ENCODE measurements at regions of chr9 and their contacts with region 1.

Region 1: GRCh38 chr9:97982683-97983588 is at the start of gene ANP32B:
- DNase-seq: peak; percentile 88 to 96 (median 93)
- H3K4me3 ChIP-seq: peak within 1 kb of the TSS; percentile 65
- H3K4me3 Mint-ChIP-seq: peak within 1 kb of the TSS; percentile 82 to 98 (median 90)
- H3K27ac ChIP-seq: peak within 1 kb of the TSS; percentile 83
- H3K27ac Mint-ChIP-seq: peak within 1 kb of the TSS; percentile 54 to 96 (median 84)
- H3K4me1 ChIP-seq: peaks cover 56% of the 10 kb centered on the region
- H3K4me1 Mint-ChIP-seq: peaks cover 29 to 39% (median 37%) of the 10 kb centered on the region in 3 donors
- H3K27me3 ChIP-seq: no peaks in the 10 kb centered on the region
- H3K27me3 Mint-ChIP-seq: no peaks in the 10 kb centered on the region
- total RNA-seq, gene ANP32B: 331 to 341 TPM

Region 2: GRCh38 chr9:97632985-97633858 is 349.7 kb before region 1 on chr9 and contains the starts of genes NCBP1 and TSTD2:
- CTCF ChIA-PET with region 1: no interaction called
- POLR2A ChIA-PET with region 1: interaction called, 10 read pairs
- DNase-seq: peak; percentile 90 to 98 (median 98)
- H3K4me3 ChIP-seq: peak within 1 kb of the TSS; percentile 75
- H3K4me3 Mint-ChIP-seq: peak within 1 kb of the TSS; percentile 95 to 99 (median 98)
- H3K27ac ChIP-seq: peak within 1 kb of the TSS; percentile 89
- H3K27ac Mint-ChIP-seq: peak within 1 kb of the TSS; percentile 99 to 100 (median 100)
- H3K4me1 ChIP-seq: peaks cover 46% of the 10 kb centered on the region
- H3K4me1 Mint-ChIP-seq: peaks cover 49 to 76% (median 69%) of the 10 kb centered on the region in 3 donors
- H3K27me3 ChIP-seq: no peaks in the 10 kb centered on the region
- H3K27me3 Mint-ChIP-seq: no peaks in the 10 kb centered on the region
- total RNA-seq, gene NCBP1: 47.7 to 49.6 TPM
- total RNA-seq, gene TSTD2: 13.8 to 14.7 TPM

Region 3: DNA sequence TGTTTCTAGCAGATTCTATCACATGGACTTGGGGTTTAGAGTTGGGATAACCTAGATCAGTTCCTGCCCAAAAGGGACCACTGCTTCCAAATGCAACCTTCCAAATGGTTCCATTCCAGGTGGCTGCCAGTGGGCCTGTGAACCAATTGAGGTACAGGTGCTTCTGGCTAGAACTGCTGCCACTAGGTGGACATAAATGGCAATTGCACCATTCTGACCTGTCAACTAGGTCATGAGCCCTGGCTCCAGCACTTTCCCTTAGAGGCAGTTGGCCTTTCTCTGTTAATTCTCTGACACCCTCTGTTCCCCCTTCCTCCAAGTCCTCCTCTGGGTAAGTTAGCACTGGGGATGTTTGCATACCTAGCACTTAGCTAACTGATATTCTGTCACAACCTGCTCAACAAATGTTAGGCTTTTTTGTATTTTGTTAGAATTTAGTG is 28.4 kb before region 1 on chr9:
- CTCF ChIA-PET with region 1: interaction called, 12 read pairs
- POLR2A ChIA-PET with region 1: no interaction called
- DNase-seq: peak; percentile 16 to 70 (median 53)
- H3K4me3 ChIP-seq: no peak overlapping the region
- H3K4me3 Mint-ChIP-seq: no peak overlapping the region
- H3K27ac ChIP-seq: no peak overlapping the region
- H3K27ac Mint-ChIP-seq: peak overlapping the region in 1 of 8 donors; percentile 11
- H3K4me1 ChIP-seq: no peaks in the 10 kb centered on the region
- H3K4me1 Mint-ChIP-seq: peaks cover 0 to 4% (median 0%) of the 10 kb centered on the region in 3 donors
- H3K27me3 ChIP-seq: no peaks in the 10 kb centered on the region
- H3K27me3 Mint-ChIP-seq: peaks cover 4% of the 10 kb centered on the region in 2 donors

Region 4: GRCh38 chr9:98002808-98003207 is 19.9 kb after region 1 on chr9:
- CTCF ChIA-PET with region 1: interaction called, 10 read pairs
- POLR2A ChIA-PET with region 1: no interaction called
- DNase-seq: no peak
- H3K4me3 ChIP-seq: no peak overlapping the region
- H3K4me3 Mint-ChIP-seq: no peak overlapping the region
- H3K27ac ChIP-seq: no peak overlapping the region
- H3K27ac Mint-ChIP-seq: peak overlapping the region in 4 of 8 donors; percentile 34 to 72 (median 49)
- H3K4me1 ChIP-seq: no peaks in the 10 kb centered on the region
- H3K4me1 Mint-ChIP-seq: peaks cover 22 to 56% (median 37%) of the 10 kb centered on the region in 3 donors
- H3K27me3 ChIP-seq: no peaks in the 10 kb centered on the region
- H3K27me3 Mint-ChIP-seq: no peaks in the 10 kb centered on the region

Region 5: DNA sequence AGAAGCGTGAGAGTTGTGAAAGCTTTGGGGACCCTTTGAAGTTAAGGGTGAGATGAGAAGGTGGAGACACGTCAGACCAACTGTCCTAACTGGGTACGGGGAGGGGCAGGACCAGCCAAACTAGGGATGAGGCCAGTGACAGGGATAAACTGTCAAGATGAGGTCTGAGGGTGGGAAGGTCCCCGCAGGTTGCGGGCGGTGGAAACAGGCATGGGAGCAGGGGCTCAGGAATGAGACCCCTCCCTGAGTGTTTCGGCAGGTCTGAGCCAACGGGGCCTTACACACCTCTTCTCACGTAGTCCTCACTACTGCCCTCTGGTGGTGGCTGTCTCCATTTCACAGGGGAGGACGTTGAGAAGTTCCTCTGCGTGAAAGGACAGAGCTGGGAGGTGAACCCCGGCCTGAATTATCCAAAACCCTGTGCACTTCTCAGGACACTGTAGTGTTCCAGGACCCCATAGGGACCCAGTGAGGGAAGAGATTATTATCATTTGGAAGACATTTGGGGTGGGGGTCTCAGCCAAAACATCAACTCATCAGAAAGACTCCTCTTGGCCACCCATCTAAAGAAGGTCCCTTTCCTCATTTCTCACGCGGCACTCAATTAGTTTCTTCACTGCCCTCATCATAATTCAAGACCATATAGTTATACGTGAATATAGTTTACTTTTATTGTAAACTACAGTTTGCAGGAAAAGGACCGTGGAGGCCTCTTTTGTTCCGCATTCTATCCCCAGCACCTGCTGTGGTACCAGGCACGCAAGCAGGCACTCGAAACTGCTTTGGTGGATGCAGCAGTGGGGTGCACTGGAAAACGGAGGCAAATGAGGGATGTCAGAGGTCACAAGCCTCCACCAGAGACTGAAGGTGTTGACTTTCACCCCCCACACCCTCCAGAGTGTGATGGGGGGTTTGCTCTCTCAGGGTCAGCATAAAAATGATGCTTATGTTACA is 51.9 kb after region 1 on chr9:
- CTCF ChIA-PET with region 1: interaction called, 11 read pairs
- POLR2A ChIA-PET with region 1: interaction called, 3 read pairs
- DNase-seq: peak; percentile 76 to 93 (median 88)
- H3K4me3 ChIP-seq: no peak overlapping the region
- H3K4me3 Mint-ChIP-seq: peak overlapping the region in 5 of 7 donors; percentile 6 to 56 (median 27)
- H3K27ac ChIP-seq: no peak overlapping the region
- H3K27ac Mint-ChIP-seq: peak overlapping the region in 6 of 8 donors; percentile 17 to 90 (median 30)
- H3K4me1 ChIP-seq: peaks cover 7% of the 10 kb centered on the region
- H3K4me1 Mint-ChIP-seq: peaks cover 6 to 8% (median 8%) of the 10 kb centered on the region in 3 donors
- H3K27me3 ChIP-seq: no peaks in the 10 kb centered on the region
- H3K27me3 Mint-ChIP-seq: peaks cover 0 to 14% of the 10 kb centered on the region in 2 donors

Region 6: DNA sequence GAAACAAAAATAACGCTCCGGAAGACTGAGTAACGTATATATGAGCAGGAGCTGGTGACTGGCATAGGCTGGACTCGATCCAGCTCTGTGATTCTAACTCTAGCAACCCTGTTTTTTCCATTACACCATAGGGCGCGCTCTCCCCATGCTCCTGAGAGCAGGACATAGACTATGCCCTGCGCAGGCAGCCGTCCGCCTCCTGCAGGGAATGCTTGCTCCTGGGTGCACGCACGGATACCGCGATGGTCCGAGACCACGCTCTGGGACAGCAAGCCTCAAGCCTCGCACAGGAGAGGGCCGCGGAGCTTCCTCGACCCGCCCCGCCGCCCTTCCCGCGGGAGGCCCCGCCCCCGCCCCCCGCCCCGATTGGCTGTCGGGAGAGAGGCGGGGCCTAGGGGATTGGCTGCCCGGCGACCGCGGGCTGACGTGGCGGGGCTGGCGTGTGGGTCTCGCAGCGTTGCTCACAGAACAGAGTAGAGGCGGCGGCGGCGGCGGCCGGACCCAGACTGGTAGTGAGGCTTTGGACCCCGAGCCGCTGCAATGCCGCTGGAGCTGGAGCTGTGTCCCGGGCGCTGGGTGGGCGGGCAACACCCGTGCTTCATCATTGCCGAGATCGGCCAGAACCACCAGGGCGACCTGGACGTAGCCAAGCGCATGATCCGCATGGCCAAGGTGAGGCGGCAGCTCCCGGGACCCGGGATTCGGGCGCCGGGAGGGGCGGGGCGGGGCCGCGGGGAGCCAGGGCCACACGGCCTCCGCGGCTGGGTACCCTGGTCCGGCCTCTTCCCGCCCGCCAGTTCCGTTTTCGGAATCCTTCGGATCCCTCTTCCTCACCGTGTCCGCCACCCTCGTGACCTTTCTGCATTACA is 73.6 kb after region 1 on chr9 and contains the start of gene NANS:
- CTCF ChIA-PET with region 1: interaction called, 5 read pairs
- POLR2A ChIA-PET with region 1: interaction called, 11 read pairs
- DNase-seq: peak; percentile 87 to 94 (median 88)
- H3K4me3 ChIP-seq: peak within 1 kb of the TSS; percentile 76
- H3K4me3 Mint-ChIP-seq: peak within 1 kb of the TSS; percentile 94 to 99 (median 96)
- H3K27ac ChIP-seq: peak within 1 kb of the TSS; percentile 72
- H3K27ac Mint-ChIP-seq: peak within 1 kb of the TSS; percentile 91 to 99 (median 96)
- H3K4me1 ChIP-seq: peaks cover 16% of the 10 kb centered on the region
- H3K4me1 Mint-ChIP-seq: peaks cover 18 to 32% (median 30%) of the 10 kb centered on the region in 3 donors
- H3K27me3 ChIP-seq: no peaks in the 10 kb centered on the region
- H3K27me3 Mint-ChIP-seq: no peaks in the 10 kb centered on the region
- total RNA-seq, gene NANS: 33.2 to 34.8 TPM